ENCODE measurements at regions of chr5 and their contacts with region 1.

Region 1: GRCh38 chr5:134041570-134042411 is 37.0 kb upstream of the VDAC1 start:
- DNase-seq: no peak
- ATAC-seq: no peak
- H3K4me3 ChIP-seq: no peak overlapping the region
- H3K4me3 Mint-ChIP-seq: no peak overlapping the region
- H3K27ac ChIP-seq: no peak overlapping the region
- H3K27ac Mint-ChIP-seq: no peak overlapping the region
- H3K4me1 ChIP-seq: peaks cover 0 to 3% of the 10 kb centered on the region in 2 donors
- H3K4me1 Mint-ChIP-seq: peaks cover 1% of the 10 kb centered on the region
- H3K27me3 ChIP-seq: no peaks in the 10 kb centered on the region
- H3K27me3 Mint-ChIP-seq: no peaks in the 10 kb centered on the region
- CTCF ChIP-seq: no peak

Region 2: GRCh38 chr5:134004592-134005375 is 37.0 kb before region 1 on chr5 and contains the start of gene VDAC1:
- CTCF ChIA-PET with region 1: interaction called, 15 read pairs
- POLR2A ChIA-PET with region 1: no interaction called
- intact Hi-C with region 1: loop called (anchors 2 kb)
- DNase-seq: peak; percentile 91
- ATAC-seq: peak; percentile 85
- H3K4me3 ChIP-seq: peak within 1 kb of the TSS; percentile 61 to 87 (median 82)
- H3K4me3 Mint-ChIP-seq: peak within 1 kb of the TSS; percentile 95
- H3K27ac ChIP-seq: peak within 1 kb of the TSS; percentile 74 to 95
- H3K27ac Mint-ChIP-seq: peak within 1 kb of the TSS; percentile 95
- H3K4me1 ChIP-seq: peaks cover 17 to 33% of the 10 kb centered on the region in 2 donors
- H3K4me1 Mint-ChIP-seq: peaks cover 44% of the 10 kb centered on the region
- H3K27me3 ChIP-seq: no peaks in the 10 kb centered on the region
- H3K27me3 Mint-ChIP-seq: no peaks in the 10 kb centered on the region
- CTCF ChIP-seq: no peak
- total RNA-seq, gene VDAC1: 60.7 and 63.4 TPM in 2 replicates

Region 3: DNA sequence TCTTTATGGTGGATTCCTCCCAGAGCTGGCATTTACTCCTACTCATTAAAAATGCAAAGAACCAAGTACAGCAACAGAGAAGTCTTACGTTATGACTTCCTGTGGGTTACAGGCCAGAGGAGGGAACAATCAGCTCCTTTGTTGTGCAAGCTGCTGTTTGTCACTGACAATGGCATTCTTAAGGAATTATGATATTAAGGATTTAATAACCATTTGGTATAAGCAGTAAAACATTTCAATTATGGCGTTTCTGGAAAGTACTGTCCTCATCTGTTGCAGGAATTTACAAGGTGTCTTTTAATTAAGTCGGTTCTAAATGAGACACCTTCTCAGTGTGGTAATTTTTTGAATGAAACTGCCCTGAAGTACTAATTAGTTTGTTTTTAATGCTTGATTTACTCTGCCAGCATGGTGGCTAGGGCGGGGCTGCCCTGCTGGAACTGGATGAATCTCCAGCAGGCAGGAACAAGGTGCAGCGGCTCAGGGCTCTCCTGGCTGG is 12.1 kb after region 1 on chr5:
- CTCF ChIA-PET with region 1: interaction called, 35 read pairs
- POLR2A ChIA-PET with region 1: no interaction called
- intact Hi-C with region 1: no loop called
- DNase-seq: no peak
- ATAC-seq: no peak
- H3K4me3 ChIP-seq: no peak overlapping the region
- H3K4me3 Mint-ChIP-seq: no peak overlapping the region
- H3K27ac ChIP-seq: no peak overlapping the region
- H3K27ac Mint-ChIP-seq: no peak overlapping the region
- H3K4me1 ChIP-seq: peaks cover 0 to 6% of the 10 kb centered on the region in 2 donors
- H3K4me1 Mint-ChIP-seq: peaks cover 7% of the 10 kb centered on the region
- H3K27me3 ChIP-seq: no peaks in the 10 kb centered on the region
- H3K27me3 Mint-ChIP-seq: no peaks in the 10 kb centered on the region
- CTCF ChIP-seq: no peak

Region 4: DNA sequence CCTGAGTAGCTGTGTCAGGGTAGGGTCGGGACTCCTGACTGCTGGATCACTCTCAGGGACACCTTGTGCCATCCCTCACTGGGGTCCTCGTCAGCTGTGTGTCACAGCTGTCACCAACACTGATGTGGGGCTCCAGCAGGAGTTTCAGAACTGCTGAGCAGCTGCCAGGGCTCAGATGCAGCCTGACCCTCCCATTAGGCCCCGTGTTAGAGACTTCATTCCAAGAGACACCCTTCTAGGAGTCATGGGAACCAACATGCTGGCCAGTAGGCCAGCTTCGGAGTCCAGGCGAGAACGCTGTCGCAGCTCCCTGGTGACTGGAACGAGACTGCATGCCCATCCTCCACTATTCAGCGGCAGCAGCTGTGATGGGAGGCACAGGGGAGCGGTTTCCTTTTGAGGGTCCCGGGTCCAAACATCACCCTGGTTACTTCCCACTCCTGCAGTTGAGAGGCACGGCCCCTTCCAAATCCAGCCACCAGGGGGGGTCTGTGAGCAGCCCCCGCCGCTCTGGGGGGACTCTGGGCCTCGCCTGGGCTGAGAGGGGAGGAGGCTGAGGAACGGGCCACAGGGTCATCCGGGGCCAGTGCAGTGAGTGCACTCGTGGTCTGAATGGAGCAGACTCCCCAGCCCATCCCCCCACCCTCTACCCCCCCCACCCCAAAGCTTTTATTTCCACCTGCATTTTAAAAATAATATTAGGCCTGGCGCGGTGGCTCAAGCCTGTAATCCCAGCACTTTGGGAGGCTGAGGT is 60.1 kb after region 1 on chr5:
- CTCF ChIA-PET with region 1: interaction called, 149 read pairs
- POLR2A ChIA-PET with region 1: interaction called, 7 read pairs
- intact Hi-C with region 1: loop called (anchors 1 kb)
- DNase-seq: peak; percentile 82
- ATAC-seq: peak; percentile 53
- H3K4me3 ChIP-seq: no peak overlapping the region
- H3K4me3 Mint-ChIP-seq: peak overlapping the region; percentile 34
- H3K27ac ChIP-seq: peak overlapping the region; percentile 76 to 88
- H3K27ac Mint-ChIP-seq: peak overlapping the region; percentile 96
- H3K4me1 ChIP-seq: peaks cover 31 to 47% of the 10 kb centered on the region in 2 donors
- H3K4me1 Mint-ChIP-seq: peaks cover 46% of the 10 kb centered on the region
- H3K27me3 ChIP-seq: no peaks in the 10 kb centered on the region
- H3K27me3 Mint-ChIP-seq: no peaks in the 10 kb centered on the region
- CTCF ChIP-seq: peak; percentile 86

Region 5: GRCh38 chr5:134140530-134141201 is 98.9 kb after region 1 on chr5:
- CTCF ChIA-PET with region 1: interaction called, 644 read pairs
- POLR2A ChIA-PET with region 1: no interaction called
- intact Hi-C with region 1: loop called (anchors 1 kb)
- DNase-seq: peak; percentile 77
- ATAC-seq: peak; percentile 73
- H3K4me3 ChIP-seq: no peak overlapping the region
- H3K4me3 Mint-ChIP-seq: no peak overlapping the region
- H3K27ac ChIP-seq: no peak overlapping the region
- H3K27ac Mint-ChIP-seq: peak overlapping the region; percentile 69
- H3K4me1 ChIP-seq: peaks cover 5 to 34% of the 10 kb centered on the region in 2 donors
- H3K4me1 Mint-ChIP-seq: peaks cover 33% of the 10 kb centered on the region
- H3K27me3 ChIP-seq: no peaks in the 10 kb centered on the region
- H3K27me3 Mint-ChIP-seq: no peaks in the 10 kb centered on the region
- CTCF ChIP-seq: peak; percentile 89

Region 6: DNA sequence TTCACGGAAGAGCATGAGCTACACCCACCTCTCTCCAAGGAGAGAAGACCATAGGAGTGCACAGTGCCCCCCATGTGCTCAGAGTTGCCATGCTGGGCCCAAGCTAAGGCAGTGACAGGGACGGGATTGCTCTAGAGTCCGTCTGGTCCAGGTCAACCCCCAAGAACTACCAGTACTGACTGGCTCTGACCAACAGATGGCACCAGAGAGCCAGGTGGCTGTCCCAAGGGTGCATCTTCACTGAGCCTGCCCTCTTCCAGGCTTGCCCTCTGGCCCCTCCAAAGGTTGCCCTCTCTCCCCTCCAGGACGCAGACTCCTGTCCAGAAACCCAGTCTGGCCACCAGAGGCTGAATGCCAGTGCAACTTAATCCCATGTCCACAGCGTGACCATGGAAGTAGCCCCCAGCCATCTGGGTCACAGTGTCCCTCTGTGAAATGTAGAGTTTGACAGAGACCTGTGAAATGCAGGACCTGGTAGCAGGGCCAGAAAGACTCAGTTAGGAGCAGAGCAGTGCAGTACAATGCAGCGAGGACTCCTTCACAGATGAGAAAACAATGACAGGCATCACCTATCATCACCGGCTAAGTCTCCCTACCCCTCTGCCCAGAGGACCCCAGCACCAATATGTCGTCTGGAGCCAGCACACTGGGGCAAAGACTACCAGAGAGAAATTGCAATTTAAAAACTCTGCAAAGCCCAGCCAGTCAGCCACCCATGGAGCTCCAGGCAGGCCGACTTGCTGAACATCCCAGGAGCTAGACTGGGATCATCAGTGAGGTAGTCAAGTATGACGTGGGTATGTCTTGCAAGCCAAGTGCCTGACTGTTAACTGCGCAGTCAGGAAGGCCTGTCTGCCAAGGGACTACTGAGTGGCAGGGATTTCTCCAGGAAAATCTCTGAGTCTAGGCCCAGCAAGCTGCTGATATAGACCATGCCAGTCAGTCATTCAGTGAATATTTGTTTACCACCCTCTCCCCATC is 142.7 kb after region 1 on chr5:
- CTCF ChIA-PET with region 1: interaction called, 11 read pairs
- POLR2A ChIA-PET with region 1: no interaction called
- intact Hi-C with region 1: no loop called
- DNase-seq: peak; percentile 83
- ATAC-seq: peak; percentile 99
- H3K4me3 ChIP-seq: no peak overlapping the region
- H3K4me3 Mint-ChIP-seq: no peak overlapping the region
- H3K27ac ChIP-seq: no peak overlapping the region
- H3K27ac Mint-ChIP-seq: no peak overlapping the region
- H3K4me1 ChIP-seq: peaks cover 0 to 6% of the 10 kb centered on the region in 2 donors
- H3K4me1 Mint-ChIP-seq: peaks cover 5% of the 10 kb centered on the region
- H3K27me3 ChIP-seq: no peaks in the 10 kb centered on the region
- H3K27me3 Mint-ChIP-seq: no peaks in the 10 kb centered on the region
- CTCF ChIP-seq: peak; percentile 96